Calu3 (cell line): ENCODE measurements at regions of chr18 and their contacts with region 1.

Region 1: DNA sequence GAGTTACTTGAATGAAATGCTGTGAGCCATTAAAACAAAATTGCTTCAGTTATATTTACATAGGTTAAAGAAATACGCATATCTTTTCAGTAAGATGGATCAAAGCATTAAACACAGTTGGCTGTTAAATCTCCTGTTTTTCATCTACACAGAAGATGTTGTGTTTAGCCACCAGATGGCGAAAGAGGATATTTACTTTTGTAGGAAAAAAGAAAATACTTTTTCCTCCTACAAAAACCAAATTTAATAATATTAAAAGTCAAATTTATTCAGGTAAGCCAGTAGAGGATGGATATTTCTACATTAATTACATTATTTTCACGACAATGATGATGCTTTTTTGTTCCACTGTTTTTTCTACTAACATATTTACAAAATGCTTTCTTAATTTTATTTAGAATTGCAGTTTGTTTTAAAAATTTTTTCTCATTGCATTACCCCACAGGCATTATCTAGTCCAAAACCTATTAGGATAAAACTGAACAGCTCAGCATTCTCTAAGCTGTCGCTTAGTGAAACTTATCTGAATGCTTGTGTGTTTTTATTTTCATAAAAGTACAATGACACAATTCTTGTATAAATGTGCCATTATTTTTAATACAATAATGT is 173.7 kb downstream of the ASXL3 start:
- DNase-seq: no peak
- H3K4me3 Mint-ChIP-seq: no peak overlapping the region
- H3K27ac Mint-ChIP-seq: no peak overlapping the region
- H3K4me1 Mint-ChIP-seq: no peaks in the 10 kb centered on the region
- H3K27me3 Mint-ChIP-seq: no peaks in the 10 kb centered on the region
- CTCF ChIP-seq: no peak

Region 2: GRCh38 chr18:33720133-33720532 is 31.6 kb before region 1 on chr18:
- CTCF ChIA-PET with region 1: no interaction called
- intact Hi-C with region 1: no loop called
- DNase-seq: no peak
- H3K4me3 Mint-ChIP-seq: no peak overlapping the region
- H3K27ac Mint-ChIP-seq: no peak overlapping the region
- H3K4me1 Mint-ChIP-seq: peaks cover 8% of the 10 kb centered on the region
- H3K27me3 Mint-ChIP-seq: no peaks in the 10 kb centered on the region
- CTCF ChIP-seq: no peak

Region 3: GRCh38 chr18:34224423-34225217 is 472.9 kb after region 1 on chr18 and contains the start of gene NOL4:
- CTCF ChIA-PET with region 1: no interaction called
- intact Hi-C with region 1: loop called (anchors 10 kb)
- DNase-seq: peak; percentile 19
- H3K4me3 Mint-ChIP-seq: no peak within 1 kb of the TSS
- H3K27ac Mint-ChIP-seq: no peak within 1 kb of the TSS
- H3K4me1 Mint-ChIP-seq: peaks cover 30% of the 10 kb centered on the region
- H3K27me3 Mint-ChIP-seq: peaks cover 50% of the 10 kb centered on the region
- CTCF ChIP-seq: no peak
- total RNA-seq, gene NOL4: not detected in 2 replicates